ENCODE measurements at regions of chr17 and their contacts with region 1.

Region 1: GRCh38 chr17:43334738-43335402 is 63.9 kb upstream of the ARL4D start:
- DNase-seq: no peak
- H3K4me3 ChIP-seq: no peak overlapping the region
- H3K27ac ChIP-seq: no peak overlapping the region
- H3K4me1 ChIP-seq: peaks cover 0 to 6% of the 10 kb centered on the region in 2 donors
- H3K27me3 ChIP-seq: no peaks in the 10 kb centered on the region
- CTCF ChIP-seq: no peak

Region 2: GRCh38 chr17:43316522-43317142 is 18.2 kb before region 1 on chr17:
- intact Hi-C with region 1: loop called (anchors 2 kb)
- DNase-seq: peak in 1 of 2 donors; percentile 63
- H3K4me3 ChIP-seq: no peak overlapping the region
- H3K27ac ChIP-seq: no peak overlapping the region
- H3K4me1 ChIP-seq: peaks cover 0 to 2% of the 10 kb centered on the region in 2 donors
- H3K27me3 ChIP-seq: no peaks in the 10 kb centered on the region
- CTCF ChIP-seq: no peak